Ovary (tissue), 10 donors: ENCODE measurements at regions of chr10 and their contacts with region 1.

Region 1: DNA sequence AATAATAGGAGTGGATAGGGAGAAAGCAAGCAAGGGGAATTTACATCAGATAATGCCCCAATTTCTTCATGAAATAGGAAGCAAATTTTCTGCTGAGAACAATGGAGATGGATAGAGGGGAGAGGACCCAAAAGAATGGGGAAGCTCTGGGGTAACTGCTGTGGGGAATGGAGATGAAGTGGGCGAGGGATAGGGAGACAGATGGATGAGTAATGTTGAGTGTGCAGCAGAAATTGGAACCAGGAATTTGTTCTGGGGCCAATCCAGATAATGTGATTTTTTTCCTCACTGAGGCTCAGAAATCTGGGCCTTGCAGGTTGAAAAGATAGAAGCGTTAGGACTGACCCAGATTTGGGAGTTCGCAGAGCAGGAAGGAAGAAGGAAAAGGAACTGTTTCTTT is 24.5 kb upstream of the MRC1 start:
- DNase-seq: no peak
- H3K4me3 ChIP-seq: no peak overlapping the region
- H3K27ac ChIP-seq: no peak overlapping the region
- H3K4me1 ChIP-seq: no peaks in the 10 kb centered on the region
- H3K27me3 ChIP-seq: no peaks in the 10 kb centered on the region
- CTCF ChIP-seq: no peak
- EP300 ChIP-seq: no peak
- POLR2A ChIP-seq: no peak

Region 2: DNA sequence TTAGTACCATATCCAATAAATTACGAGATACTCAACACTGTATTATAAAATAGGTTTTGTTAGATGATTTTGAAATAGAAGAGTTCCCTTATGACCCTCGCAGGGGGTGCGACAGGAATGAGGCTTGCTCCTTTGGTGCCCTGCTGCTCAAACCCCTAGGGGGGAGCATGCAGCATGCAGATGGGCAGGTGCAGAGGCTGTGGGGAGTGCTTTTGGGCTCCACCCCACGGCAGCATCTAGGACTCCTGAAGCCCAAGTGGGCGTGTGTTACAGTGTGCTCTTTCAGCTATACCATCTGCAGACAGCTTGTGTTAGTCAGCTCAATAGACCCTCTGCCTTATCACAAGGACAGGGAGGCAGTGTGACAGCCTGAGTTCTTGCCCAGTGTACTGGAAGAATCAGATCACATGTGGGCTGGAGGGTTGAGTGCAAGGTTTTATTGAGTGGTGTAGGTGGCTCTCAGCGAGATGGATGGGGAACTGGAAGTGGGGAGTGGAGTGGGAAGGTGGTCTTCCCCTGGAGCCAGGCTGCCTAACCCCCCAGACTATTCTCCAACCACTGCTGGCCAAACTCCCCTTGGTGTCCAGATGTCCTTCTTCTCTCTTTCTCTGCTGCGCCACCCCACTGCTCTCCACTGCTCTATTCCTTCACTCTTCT is 21.4 kb after region 1 on chr10:
- intact Hi-C with region 1: loop called in 1 of 4 experiments (anchors 1 kb)
- DNase-seq: no peak
- H3K4me3 ChIP-seq: no peak overlapping the region
- H3K27ac ChIP-seq: no peak overlapping the region
- H3K4me1 ChIP-seq: no peaks in the 10 kb centered on the region
- H3K27me3 ChIP-seq: no peaks in the 10 kb centered on the region
- CTCF ChIP-seq: no peak
- EP300 ChIP-seq: no peak
- POLR2A ChIP-seq: no peak